Heart left ventricle (tissue), 16 donors: ENCODE measurements at regions of chr14 and their contacts with region 1.

Region 1: GRCh38 chr14:104563742-104564615 is 15.6 kb upstream of the C14orf180 start:
- DNase-seq: peak; percentile 70 to 86 (median 78)
- ATAC-seq: peak; percentile 44 to 88 (median 80)
- H3K4me3 ChIP-seq: no peak overlapping the region
- H3K27ac ChIP-seq: no peak overlapping the region
- H3K4me1 ChIP-seq: peaks cover 0 to 23% (median 12%) of the 10 kb centered on the region in 12 donors
- H3K27me3 ChIP-seq: peaks cover 0 to 44% (median 4%) of the 10 kb centered on the region in 9 donors
- CTCF ChIP-seq: peak; percentile 67 to 91 (median 86)
- POLR2A ChIP-seq: no peak

Region 2: GRCh38 chr14:104370256-104370870 is 193.6 kb before region 1 on chr14:
- intact Hi-C with region 1: loop called in 2 of 10 experiments (anchors 5 to 10 kb)
- DNase-seq: peak in 3 of 5 donors; percentile 31 to 45 (median 40)
- ATAC-seq: peak in 3 of 4 donors; percentile 52 to 84 (median 66)
- H3K4me3 ChIP-seq: no peak overlapping the region
- H3K27ac ChIP-seq: no peak overlapping the region
- H3K4me1 ChIP-seq: no peaks in the 10 kb centered on the region
- H3K27me3 ChIP-seq: peaks cover 0 to 18% (median 0%) of the 10 kb centered on the region in 9 donors
- CTCF ChIP-seq: peak; percentile 20 to 65 (median 52)
- POLR2A ChIP-seq: no peak